Caco-2 (cell line): ENCODE measurements at regions of chr6 and their contacts with region 1.

Region 1: GRCh38 chr6:91081452-91082067 is 494.7 kb upstream of the MAP3K7 start:
- DNase-seq: peak in 1 of 2 experiments; percentile 59
- H3K4me3 ChIP-seq: no peak overlapping the region
- H3K4me3 Mint-ChIP-seq: no peak overlapping the region
- H3K27ac Mint-ChIP-seq: no peak overlapping the region
- H3K4me1 ChIP-seq: 0 out of 2 replicates have a peak, but pooled peaks cover 7% of the 10 kb centered on the region
- H3K4me1 Mint-ChIP-seq: peaks cover 6% of the 10 kb centered on the region
- H3K27me3 ChIP-seq: no peaks in the 10 kb centered on the region
- H3K27me3 Mint-ChIP-seq: no peaks in the 10 kb centered on the region
- CTCF ChIP-seq: peak; percentile 53 to 60

Region 2: DNA sequence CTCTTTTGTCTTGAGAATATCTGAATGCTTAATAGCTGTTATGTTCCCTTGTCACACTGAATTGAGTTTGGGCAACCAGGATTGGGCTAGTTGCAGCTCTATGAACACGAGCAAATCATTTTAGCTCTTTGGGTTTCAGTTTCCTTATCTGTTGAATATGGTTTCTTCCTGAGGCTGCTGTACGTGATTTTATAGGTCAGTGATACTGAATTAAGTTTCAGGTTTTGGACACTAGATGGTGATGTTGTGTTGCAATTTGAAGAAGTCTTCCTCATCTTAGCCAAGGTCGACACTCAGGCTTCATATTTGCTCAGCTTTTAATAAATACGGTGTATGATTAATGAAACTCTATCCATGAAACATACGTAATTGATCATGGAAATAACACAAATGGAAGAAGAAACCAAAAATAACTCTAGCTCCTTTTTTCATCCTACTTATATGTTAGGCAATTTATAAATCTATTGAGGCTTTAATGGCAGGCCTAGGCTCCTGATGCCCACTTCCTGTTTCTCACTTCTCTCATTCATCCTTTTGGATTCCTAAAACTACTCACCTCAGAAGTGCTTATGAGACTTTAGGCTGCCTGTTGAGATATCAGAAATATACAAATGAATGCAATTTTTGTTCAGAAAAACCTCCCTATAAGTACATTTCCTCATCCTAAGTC is 140.6 kb before region 1 on chr6:
- CTCF ChIA-PET with region 1: no interaction called
- POLR2A ChIA-PET with region 1: no interaction called
- intact Hi-C with region 1: loop called (anchors 1 kb)
- DNase-seq: peak in 1 of 2 experiments; percentile 46
- H3K4me3 ChIP-seq: no peak overlapping the region
- H3K4me3 Mint-ChIP-seq: no peak overlapping the region
- H3K27ac Mint-ChIP-seq: no peak overlapping the region
- H3K4me1 ChIP-seq: no peaks in the 10 kb centered on the region
- H3K4me1 Mint-ChIP-seq: no peaks in the 10 kb centered on the region
- H3K27me3 ChIP-seq: no peaks in the 10 kb centered on the region; the same call in 1 of the 2 replicates
- H3K27me3 Mint-ChIP-seq: no peaks in the 10 kb centered on the region
- CTCF ChIP-seq: peak; percentile 45 to 58

Region 3: DNA sequence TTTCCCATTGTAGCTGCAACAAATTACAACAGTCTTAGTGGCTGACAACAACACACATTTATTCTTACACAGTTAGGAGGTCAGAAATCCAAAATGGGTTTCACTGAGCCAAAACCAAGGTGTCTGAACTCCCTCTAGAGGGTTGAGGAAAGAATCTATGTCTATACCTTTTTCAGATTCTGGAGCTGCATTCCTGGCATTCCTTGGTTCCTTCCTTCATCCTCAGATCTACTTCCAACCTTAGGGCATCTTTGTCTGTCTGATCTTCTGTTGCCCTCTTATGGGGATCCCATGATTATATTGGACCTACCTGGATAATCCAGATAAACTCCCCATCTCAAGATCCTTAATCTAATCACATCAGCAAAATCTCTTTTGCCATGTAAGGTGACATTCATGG is 46.2 kb after region 1 on chr6:
- CTCF ChIA-PET with region 1: no interaction called
- POLR2A ChIA-PET with region 1: no interaction called
- intact Hi-C with region 1: loop called (anchors 1 kb)
- DNase-seq: no peak
- H3K4me3 ChIP-seq: no peak overlapping the region
- H3K4me3 Mint-ChIP-seq: no peak overlapping the region
- H3K27ac Mint-ChIP-seq: no peak overlapping the region
- H3K4me1 ChIP-seq: no peaks in the 10 kb centered on the region
- H3K4me1 Mint-ChIP-seq: no peaks in the 10 kb centered on the region
- H3K27me3 ChIP-seq: no peaks in the 10 kb centered on the region
- H3K27me3 Mint-ChIP-seq: no peaks in the 10 kb centered on the region
- CTCF ChIP-seq: no peak

Region 4: DNA sequence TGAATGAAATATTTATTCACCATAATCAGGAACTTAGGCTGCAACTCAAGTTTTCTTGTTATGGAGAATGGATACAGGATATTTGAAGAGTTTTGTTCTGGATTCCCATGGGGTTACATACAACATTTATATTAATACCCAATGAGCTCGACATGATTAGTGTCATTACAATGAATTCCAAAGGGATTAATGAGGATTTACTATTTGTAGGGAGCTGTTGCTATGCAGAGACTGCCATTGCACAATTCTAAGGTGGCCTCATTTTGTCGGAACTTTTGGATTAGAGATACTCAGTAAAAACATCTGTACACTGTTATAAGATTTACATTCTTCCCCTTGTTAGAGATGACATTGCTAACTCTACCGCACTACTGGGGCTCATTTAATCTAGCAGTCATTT is 92.1 kb after region 1 on chr6:
- CTCF ChIA-PET with region 1: interaction called, 5 read pairs
- POLR2A ChIA-PET with region 1: no interaction called
- intact Hi-C with region 1: loop called (anchors 2 kb)
- DNase-seq: no peak
- H3K4me3 ChIP-seq: no peak overlapping the region
- H3K4me3 Mint-ChIP-seq: no peak overlapping the region
- H3K27ac Mint-ChIP-seq: no peak overlapping the region
- H3K4me1 ChIP-seq: no peaks in the 10 kb centered on the region
- H3K4me1 Mint-ChIP-seq: no peaks in the 10 kb centered on the region
- H3K27me3 ChIP-seq: no peaks in the 10 kb centered on the region
- H3K27me3 Mint-ChIP-seq: no peaks in the 10 kb centered on the region
- CTCF ChIP-seq: no peak

Region 5: DNA sequence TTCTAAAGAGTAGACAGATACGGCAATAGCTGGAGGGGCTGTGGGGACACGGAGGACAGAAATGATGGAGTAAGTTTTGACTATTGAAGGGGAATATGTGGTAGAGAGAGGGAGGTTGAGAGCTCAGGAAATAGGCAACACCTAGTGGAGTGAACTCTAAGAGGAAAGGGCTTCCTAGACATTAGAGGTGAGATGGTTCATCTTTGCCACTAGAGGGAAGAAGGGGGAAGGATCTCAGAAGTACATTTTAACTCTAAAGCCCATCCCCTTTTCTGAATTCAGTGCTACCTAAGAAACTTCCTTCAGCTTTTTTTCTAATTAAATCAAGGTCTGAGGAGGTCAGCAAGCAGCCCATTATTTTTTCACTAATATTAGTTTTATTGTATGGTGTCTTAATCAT is 194.8 kb after region 1 on chr6:
- CTCF ChIA-PET with region 1: no interaction called
- POLR2A ChIA-PET with region 1: no interaction called
- intact Hi-C with region 1: loop called (anchors 2 kb)
- DNase-seq: peak in 1 of 2 experiments; percentile 8
- H3K4me3 ChIP-seq: no peak overlapping the region
- H3K4me3 Mint-ChIP-seq: no peak overlapping the region
- H3K27ac Mint-ChIP-seq: no peak overlapping the region
- H3K4me1 ChIP-seq: no peaks in the 10 kb centered on the region
- H3K4me1 Mint-ChIP-seq: no peaks in the 10 kb centered on the region
- H3K27me3 ChIP-seq: no peaks in the 10 kb centered on the region
- H3K27me3 Mint-ChIP-seq: peaks cover 2% of the 10 kb centered on the region
- CTCF ChIP-seq: peak; percentile 43 to 58

Region 6: DNA sequence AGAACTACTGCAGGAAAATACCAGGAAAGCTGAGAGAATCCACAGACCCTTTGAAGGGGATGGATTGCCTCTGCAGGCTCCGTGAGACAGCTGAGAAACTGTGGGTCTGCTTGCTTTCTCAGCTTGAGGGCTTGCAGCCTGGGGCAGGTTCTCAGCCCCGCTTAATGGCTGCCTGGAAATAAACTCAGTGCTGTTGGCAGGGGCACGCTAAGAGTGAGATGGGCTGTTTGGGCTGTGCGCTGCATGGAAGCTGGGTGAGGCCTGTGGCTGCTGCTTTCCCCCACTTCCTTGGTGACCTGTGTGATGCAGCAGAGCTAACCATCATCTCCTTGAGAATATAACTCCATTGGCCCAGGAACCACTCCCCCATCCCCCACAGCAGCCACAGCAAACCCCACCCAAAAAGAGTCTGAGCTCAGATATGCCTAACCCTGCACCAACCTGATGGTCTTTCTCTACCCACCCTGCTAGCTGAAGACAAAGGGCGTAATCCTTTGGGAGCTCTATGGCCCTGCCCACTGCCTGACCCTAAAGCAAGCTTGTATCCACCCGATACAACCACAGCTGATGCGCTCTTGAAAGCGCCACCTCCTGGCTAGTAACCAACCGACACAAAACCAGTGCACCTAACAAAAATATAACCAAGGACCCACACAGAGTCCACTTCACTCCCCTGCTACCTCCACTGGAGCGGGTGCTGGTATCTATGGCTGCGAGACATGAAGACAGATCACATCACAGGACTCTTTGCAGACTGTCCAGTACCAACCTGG is 305.9 kb after region 1 on chr6:
- CTCF ChIA-PET with region 1: no interaction called
- POLR2A ChIA-PET with region 1: no interaction called
- intact Hi-C with region 1: loop called (anchors 5 kb)
- DNase-seq: no peak
- H3K4me3 ChIP-seq: no peak overlapping the region
- H3K4me3 Mint-ChIP-seq: no peak overlapping the region
- H3K27ac Mint-ChIP-seq: no peak overlapping the region
- H3K4me1 ChIP-seq: no peaks in the 10 kb centered on the region
- H3K4me1 Mint-ChIP-seq: no peaks in the 10 kb centered on the region
- H3K27me3 ChIP-seq: no peaks in the 10 kb centered on the region
- H3K27me3 Mint-ChIP-seq: no peaks in the 10 kb centered on the region
- CTCF ChIP-seq: no peak